GM10248 (cell line): ENCODE measurements at regions of chr17 and their contacts with region 1.

Region 1: GRCh38 chr17:66727639-66728570 is 107.0 kb upstream of the CACNG5 start:
- DNase-seq: peak; percentile 82
- CTCF ChIP-seq: peak; percentile 78

Region 2: DNA sequence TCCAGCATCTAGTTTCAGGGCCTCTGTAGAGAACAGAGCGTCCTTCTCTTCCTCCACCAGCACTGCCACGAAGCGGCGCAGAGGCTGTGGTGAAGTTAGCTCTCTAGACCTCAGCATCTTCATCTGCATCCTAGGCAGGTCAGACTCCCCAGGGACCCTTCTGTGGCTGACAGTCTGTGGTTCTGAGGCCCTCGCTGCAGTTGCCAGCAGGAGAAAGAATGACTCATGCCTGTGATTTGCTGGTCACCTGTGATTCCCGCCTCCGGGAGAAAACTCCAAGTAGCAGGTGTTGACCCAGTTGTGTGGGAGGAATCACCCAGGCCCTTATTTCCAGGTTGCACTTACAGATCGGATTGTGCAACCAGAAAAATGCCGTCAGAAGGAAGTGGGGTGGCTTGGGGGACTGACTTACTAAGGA is 10.3 kb before region 1 on chr17:
- CTCF ChIA-PET with region 1: interaction called, 14 read pairs
- POLR2A ChIA-PET with region 1: no interaction called
- DNase-seq: peak; percentile 63
- CTCF ChIP-seq: no peak

Region 3: GRCh38 chr17:67157732-67158639 is 430.1 kb after region 1 on chr17:
- CTCF ChIA-PET with region 1: interaction called, 11 read pairs
- POLR2A ChIA-PET with region 1: no interaction called
- DNase-seq: peak; percentile 17
- CTCF ChIP-seq: peak; percentile 21